IMR-90 (cell line): ENCODE measurements at regions of chr1 and their contacts with region 1.

Region 1: GRCh38 chr1:29839726-29840125 is 603.4 kb downstream of the PTPRU start:
- DNase-seq: no peak
- ATAC-seq: no peak
- H3K4me3 ChIP-seq: no peak overlapping the region
- H3K27ac ChIP-seq: no peak overlapping the region
- H3K4me1 ChIP-seq: no peaks in the 10 kb centered on the region
- H3K27me3 ChIP-seq: no peaks in the 10 kb centered on the region
- CTCF ChIP-seq: no peak
- POLR2A ChIP-seq: no peak
- RAD21 ChIP-seq: no peak

Region 2: GRCh38 chr1:29977550-29977949 is 137.8 kb after region 1 on chr1:
- CTCF ChIA-PET with region 1: no interaction called
- POLR2A ChIA-PET with region 1: interaction called, 27 read pairs
- dilution Hi-C with region 1: no loop called
- in situ Hi-C with region 1: no loop called
- intact Hi-C with region 1: no loop called
- DNase-seq: no peak
- ATAC-seq: no peak
- H3K4me3 ChIP-seq: no peak overlapping the region
- H3K27ac ChIP-seq: no peak overlapping the region
- H3K4me1 ChIP-seq: no peaks in the 10 kb centered on the region
- H3K27me3 ChIP-seq: no peaks in the 10 kb centered on the region
- CTCF ChIP-seq: no peak
- POLR2A ChIP-seq: no peak
- RAD21 ChIP-seq: no peak